ENCODE measurements at regions of chr3 and their contacts with region 1.

Region 1: GRCh38 chr3:133573054-133573628 is 345 bp upstream of the CDV3 start:
- DNase-seq: peak; percentile 100
- H3K4me3 Mint-ChIP-seq: peak overlapping the region; percentile 95
- H3K27ac Mint-ChIP-seq: peak overlapping the region; percentile 33
- H3K4me1 Mint-ChIP-seq: peaks cover 71% of the 10 kb centered on the region
- H3K27me3 Mint-ChIP-seq: no peaks in the 10 kb centered on the region
- CTCF ChIP-seq: peak; percentile 41

Region 2: DNA sequence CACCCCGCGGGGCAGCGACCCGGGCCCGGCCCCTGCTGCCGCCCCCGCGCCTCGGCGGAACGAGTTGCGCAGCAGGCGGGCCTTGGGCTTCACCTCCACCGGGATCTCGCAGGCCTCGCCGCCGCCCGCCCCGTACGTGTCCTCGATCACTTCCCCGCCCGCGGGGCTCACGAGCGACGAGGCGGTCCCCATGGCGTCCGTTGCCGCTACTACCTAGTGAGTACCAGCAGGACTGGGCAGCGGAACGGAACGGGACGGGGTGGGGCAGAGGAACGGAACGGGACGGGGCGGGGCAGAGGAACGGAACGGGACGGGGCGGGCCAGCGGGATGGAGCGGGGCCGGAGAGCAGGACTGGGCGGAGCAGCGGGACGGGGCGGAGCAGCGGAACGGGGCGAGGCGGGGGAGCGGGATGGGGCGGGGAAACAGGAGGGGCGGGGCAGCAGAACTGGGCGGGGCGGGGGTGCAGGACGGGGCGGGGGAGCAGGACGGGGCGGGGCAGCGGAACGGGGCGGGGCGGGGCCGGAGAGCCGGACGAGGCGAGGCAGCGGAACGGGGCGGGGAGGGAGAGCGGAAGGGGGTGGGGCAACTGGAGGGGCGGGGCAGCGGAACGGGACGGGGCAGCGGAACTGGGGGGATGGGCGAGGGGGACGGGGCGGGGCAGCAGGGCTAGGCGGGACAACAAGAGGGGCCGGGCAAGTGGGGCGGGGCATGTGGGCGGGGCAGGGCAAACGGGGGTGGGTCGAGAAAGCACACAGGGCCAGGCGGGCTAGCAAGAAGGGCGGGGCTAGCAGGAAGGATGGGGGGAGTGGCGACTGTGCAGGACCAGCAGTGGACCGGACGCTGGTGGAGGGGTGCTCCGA is 850.7 kb before region 1 on chr3 and contains the start of gene NPHP3:
- CTCF ChIA-PET with region 1: interaction called, 3 read pairs
- intact Hi-C with region 1: loop called (anchors 5 kb)
- DNase-seq: peak; percentile 99
- H3K4me3 Mint-ChIP-seq: peak within 1 kb of the TSS; percentile 84
- H3K27ac Mint-ChIP-seq: peak within 1 kb of the TSS; percentile 84
- H3K4me1 Mint-ChIP-seq: peaks cover 30% of the 10 kb centered on the region
- H3K27me3 Mint-ChIP-seq: peaks cover 9% of the 10 kb centered on the region
- CTCF ChIP-seq: no peak
- total RNA-seq, gene NPHP3: 34.4 and 40.3 TPM in 2 replicates

Region 3: DNA sequence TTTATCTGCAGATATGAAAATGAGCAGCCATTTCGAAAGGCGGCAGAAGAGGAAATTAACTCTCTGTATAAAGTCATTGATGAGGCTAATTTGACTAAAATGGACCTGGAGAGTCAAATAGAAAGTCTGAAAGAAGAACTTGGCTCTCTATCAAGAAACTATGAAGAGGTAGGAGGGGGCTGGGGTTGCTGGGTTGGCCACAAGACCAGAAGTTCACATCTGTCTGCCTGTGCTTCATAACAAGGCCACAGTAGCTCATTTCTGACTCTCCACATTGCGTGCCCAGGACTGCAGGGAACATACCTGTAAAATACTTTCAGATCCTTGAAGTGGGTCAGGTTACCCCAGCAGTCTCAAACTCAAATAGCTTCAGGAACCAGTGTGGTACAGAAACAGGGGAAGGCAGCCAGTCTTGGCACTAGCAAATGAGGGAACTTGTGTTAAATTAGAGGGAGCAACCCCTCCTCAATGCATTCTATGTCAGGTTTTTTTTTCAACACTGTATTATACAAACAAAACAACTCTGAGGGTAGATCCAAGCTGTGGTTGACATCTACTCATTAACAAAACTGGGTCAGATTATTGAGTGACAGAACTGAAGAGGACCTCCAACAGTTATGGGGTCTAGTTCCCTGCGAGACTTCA is 124.5 kb before region 1 on chr3:
- CTCF ChIA-PET with region 1: interaction called, 13 read pairs
- intact Hi-C with region 1: loop called (anchors 1 kb)
- DNase-seq: no peak
- H3K4me3 Mint-ChIP-seq: no peak overlapping the region
- H3K27ac Mint-ChIP-seq: no peak overlapping the region
- H3K4me1 Mint-ChIP-seq: peaks cover 14% of the 10 kb centered on the region
- H3K27me3 Mint-ChIP-seq: no peaks in the 10 kb centered on the region
- CTCF ChIP-seq: no peak

Region 4: DNA sequence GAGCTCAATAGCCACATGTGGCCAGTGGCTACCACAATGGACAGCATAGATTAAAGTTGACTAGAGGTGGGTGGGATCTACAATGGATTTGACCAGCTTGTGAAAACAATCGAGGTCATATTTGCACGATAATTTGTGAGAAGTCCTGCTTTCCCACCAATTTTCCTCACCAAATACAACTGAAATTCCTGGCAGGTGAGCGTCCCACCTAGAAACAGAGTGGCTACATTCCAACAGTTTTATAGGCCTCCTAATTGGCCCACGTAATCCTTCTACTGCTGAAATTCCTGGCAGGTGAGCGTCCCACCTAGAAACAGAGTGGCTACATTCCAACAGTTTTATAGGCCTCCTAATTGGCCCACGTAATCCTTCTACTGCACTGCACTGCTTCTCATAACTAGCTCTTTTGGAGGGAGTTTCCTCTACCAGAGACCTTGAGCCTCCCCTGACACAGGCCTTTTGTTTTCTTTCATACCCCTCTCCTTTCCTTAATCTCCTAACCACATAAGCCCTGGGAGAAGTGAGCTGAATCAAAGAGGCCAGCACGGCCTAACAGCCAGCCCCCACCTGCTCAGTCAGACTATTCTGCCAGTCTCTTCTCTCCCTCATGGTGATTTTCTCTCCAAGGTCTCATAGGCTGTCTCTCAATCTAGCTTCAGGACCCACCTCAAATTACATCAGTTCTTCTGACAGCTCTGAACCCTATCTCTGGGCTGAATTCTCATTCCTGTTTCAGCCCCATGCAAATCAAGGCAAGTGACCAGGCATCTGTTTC is 93.1 kb before region 1 on chr3:
- CTCF ChIA-PET with region 1: interaction called, 15 read pairs
- intact Hi-C with region 1: loop called (anchors 2 kb)
- DNase-seq: peak; percentile 79
- H3K4me3 Mint-ChIP-seq: peak overlapping the region; percentile 3
- H3K27ac Mint-ChIP-seq: peak overlapping the region; percentile 94
- H3K4me1 Mint-ChIP-seq: peaks cover 16% of the 10 kb centered on the region
- H3K27me3 Mint-ChIP-seq: no peaks in the 10 kb centered on the region
- CTCF ChIP-seq: no peak

Region 5: DNA sequence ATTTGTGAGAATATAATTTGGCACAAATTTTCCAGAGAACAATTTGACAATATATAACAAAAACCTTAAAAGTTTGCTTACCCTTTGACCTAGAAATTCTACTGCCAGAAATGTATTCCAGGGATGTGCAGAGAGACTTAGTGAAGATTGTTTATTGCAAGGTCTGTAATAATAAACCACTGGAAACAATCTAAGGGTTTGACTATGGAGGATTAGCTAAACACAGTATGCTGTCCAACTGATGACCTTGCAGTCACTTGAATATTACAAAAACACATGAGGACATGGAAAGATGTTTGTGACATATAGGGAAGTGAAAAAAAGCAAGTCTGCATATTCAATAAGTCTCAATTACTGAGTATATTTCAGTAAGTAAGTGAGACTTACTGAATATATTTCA is 47.7 kb before region 1 on chr3:
- CTCF ChIA-PET with region 1: interaction called, 12 read pairs
- intact Hi-C with region 1: loop called (anchors 2 kb)
- DNase-seq: no peak
- H3K4me3 Mint-ChIP-seq: no peak overlapping the region
- H3K27ac Mint-ChIP-seq: no peak overlapping the region
- H3K4me1 Mint-ChIP-seq: peaks cover 28% of the 10 kb centered on the region
- H3K27me3 Mint-ChIP-seq: no peaks in the 10 kb centered on the region
- CTCF ChIP-seq: no peak